MCF 10A (cell line): ENCODE measurements at regions of chr2 and their contacts with region 1.

Region 1: GRCh38 chr2:101151141-101151858 is at the start of gene TBC1D8:
- DNase-seq: peak; percentile 82
- H3K4me3 Mint-ChIP-seq: peak within 1 kb of the TSS; percentile 91
- H3K27ac Mint-ChIP-seq: peak within 1 kb of the TSS; percentile 55
- H3K4me1 Mint-ChIP-seq: peaks cover 54% of the 10 kb centered on the region
- H3K27me3 Mint-ChIP-seq: no peaks in the 10 kb centered on the region
- CTCF ChIP-seq: no peak
- total RNA-seq, gene TBC1D8: 48.1 and 50.9 TPM in 2 replicates

Region 2: GRCh38 chr2:100730346-100730745 is 421.0 kb before region 1 on chr2:
- CTCF ChIA-PET with region 1: interaction called, 4 read pairs
- POLR2A ChIA-PET with region 1: no interaction called
- intact Hi-C with region 1: loop called (anchors 2 kb)
- DNase-seq: peak; percentile 85
- H3K4me3 Mint-ChIP-seq: no peak overlapping the region
- H3K27ac Mint-ChIP-seq: no peak overlapping the region
- H3K4me1 Mint-ChIP-seq: peaks cover 20% of the 10 kb centered on the region
- H3K27me3 Mint-ChIP-seq: peaks cover 12% of the 10 kb centered on the region
- CTCF ChIP-seq: peak; percentile 77

Region 3: DNA sequence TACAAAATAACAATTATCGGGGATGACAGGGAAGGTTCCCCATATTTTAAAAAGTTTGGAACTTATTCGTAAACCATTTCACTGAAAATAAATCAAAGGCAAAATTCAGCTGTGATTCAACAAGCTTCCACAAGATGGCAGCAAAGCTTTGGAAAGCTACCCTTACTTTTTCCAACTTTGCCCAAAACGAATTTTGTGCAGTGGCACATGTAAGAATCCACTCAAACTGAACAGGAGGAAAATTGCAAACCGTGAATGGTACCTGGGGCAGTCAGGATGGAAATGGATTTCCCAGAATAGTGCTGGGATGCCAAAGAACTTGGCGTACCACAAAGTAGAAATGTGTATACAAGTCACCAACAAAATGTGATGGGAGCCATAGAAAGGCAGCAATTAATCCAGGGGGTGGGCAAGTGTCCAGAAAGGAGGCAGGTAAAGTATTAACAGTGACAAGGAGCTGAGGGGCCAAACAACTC is 138.6 kb before region 1 on chr2:
- CTCF ChIA-PET with region 1: interaction called, 40 read pairs
- POLR2A ChIA-PET with region 1: interaction called, 15 read pairs
- intact Hi-C with region 1: loop called (anchors 1 kb)
- DNase-seq: peak; percentile 60
- H3K4me3 Mint-ChIP-seq: no peak overlapping the region
- H3K27ac Mint-ChIP-seq: no peak overlapping the region
- H3K4me1 Mint-ChIP-seq: peaks cover 3% of the 10 kb centered on the region
- H3K27me3 Mint-ChIP-seq: no peaks in the 10 kb centered on the region
- CTCF ChIP-seq: peak; percentile 63

Region 4: DNA sequence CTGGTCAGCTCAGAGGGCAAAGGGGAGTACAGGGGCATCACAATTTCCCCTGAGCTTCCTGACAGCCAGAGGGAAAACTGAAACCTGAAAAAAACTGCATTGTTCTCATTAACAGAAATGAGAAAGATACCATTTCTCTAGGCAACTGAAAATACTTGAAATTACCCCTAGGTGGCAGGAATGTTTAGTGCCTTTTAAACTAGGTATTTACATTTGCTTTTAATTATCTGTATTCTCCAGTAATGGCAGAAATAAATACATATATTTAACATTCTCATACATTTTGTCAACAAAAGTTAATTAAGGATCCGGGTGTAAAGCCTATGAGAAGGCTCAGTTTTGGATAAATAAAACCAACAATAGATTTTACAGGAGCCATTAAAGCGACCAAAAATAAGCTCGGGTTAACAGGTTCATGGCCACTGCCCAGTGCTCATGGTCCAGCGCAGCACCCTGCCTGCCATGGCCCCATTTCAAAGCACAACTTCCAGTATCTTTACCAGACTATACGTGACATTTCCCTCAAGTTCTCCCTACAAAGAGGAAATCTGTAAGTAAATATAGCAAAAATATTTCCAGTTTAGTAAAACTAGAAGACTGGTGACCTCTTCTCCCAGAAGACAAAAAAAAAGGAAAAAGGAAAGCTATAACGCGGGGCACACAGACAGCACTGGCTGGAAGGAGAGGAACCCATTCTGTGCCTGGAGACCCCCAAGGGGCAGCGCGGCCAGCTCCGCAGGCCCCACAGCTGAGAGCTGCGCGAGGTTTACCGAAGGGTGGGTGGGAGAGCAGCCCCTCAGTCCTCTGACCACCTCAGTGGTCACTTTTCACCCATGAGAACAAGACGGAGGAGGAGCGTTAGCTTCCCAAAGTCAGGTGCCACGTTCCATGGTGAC is 114.5 kb before region 1 on chr2:
- CTCF ChIA-PET with region 1: interaction called, 79 read pairs
- POLR2A ChIA-PET with region 1: interaction called, 7 read pairs
- intact Hi-C with region 1: loop called (anchors 1 kb)
- DNase-seq: peak; percentile 35
- H3K4me3 Mint-ChIP-seq: no peak overlapping the region
- H3K27ac Mint-ChIP-seq: no peak overlapping the region
- H3K4me1 Mint-ChIP-seq: peaks cover 5% of the 10 kb centered on the region
- H3K27me3 Mint-ChIP-seq: no peaks in the 10 kb centered on the region
- CTCF ChIP-seq: peak; percentile 53

Region 5: DNA sequence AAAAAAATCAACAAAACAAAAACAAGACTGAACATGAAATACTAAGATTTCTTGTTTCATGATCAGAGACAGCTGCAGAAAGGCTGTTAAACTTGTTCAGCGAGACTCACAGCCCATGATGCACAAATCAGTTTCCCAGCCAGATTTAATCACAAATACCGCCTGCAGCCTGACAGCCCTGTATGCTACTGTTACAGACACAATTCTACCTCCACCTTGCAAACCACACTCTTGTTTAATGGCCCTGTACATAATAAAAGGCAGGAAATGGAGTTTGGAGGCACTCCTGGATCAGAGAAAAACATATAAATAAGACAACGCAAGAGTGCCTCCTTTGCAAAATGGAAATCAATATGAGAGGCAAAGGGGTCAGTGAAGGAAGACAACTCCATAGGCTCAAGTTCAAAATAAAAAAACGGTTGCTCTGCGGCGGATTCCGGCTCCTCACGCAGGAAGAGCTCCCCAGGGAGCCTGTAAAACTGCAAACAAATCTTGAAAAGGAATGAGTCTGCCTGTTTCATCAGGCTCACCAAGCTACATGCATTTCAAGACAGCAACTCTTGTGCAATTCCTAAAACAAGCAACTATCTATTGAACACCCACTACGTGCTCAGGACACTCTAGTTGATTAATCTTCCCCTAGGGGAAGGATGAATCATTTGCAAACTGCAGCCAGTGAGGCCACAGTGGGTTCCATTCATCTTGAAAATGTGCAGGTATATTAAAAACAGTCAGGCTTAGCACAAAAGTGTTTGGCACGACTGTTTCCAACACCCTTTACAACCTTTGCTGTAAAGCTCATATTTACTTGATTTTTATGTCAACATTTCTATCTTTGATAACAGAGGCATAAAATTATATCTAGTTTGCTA is 37.7 kb before region 1 on chr2:
- CTCF ChIA-PET with region 1: interaction called, 3 read pairs
- POLR2A ChIA-PET with region 1: interaction called, 275 read pairs
- intact Hi-C with region 1: loop called (anchors 5 kb)
- DNase-seq: peak; percentile 95
- H3K4me3 Mint-ChIP-seq: peak overlapping the region; percentile 67
- H3K27ac Mint-ChIP-seq: peak overlapping the region; percentile 90
- H3K4me1 Mint-ChIP-seq: peaks cover 47% of the 10 kb centered on the region
- H3K27me3 Mint-ChIP-seq: no peaks in the 10 kb centered on the region
- CTCF ChIP-seq: no peak

Region 6: DNA sequence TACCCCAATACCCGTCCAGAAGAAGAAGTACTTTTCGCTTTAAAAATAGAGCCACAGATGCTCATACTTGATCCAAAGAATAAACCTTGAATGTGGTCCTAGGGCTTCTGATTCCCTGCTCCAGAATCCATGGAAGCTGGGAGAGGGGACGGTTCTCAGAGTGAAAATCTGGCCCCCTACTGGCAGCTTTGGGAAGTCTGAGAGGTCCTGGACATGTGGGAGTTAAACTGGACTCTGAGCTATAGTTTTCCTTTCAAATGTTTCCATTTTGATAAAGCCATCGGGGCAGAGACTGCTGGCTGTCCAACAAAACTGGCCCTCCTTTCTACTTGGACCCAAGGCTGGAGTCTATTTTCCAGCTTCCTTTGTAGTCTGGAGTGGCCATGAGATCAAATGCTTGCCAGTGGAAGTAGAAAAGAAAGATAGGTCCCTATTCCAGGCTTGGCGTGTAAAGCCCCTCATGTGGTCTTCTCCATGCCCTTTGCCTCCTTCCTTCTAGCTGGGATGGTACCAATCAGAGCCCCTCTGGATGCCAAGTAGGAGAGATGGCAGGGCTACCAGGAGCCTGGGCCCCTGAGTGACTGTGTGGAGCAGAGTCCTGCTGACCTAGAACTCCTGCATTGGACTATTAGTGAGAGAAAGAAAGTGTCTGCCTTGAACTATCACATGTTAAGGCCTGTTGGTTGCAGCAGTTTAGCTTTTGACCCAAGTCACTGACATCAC is 37.5 kb after region 1 on chr2:
- CTCF ChIA-PET with region 1: interaction called, 16 read pairs
- POLR2A ChIA-PET with region 1: interaction called, 25 read pairs
- intact Hi-C with region 1: no loop called
- DNase-seq: peak; percentile 42
- H3K4me3 Mint-ChIP-seq: no peak overlapping the region
- H3K27ac Mint-ChIP-seq: no peak overlapping the region
- H3K4me1 Mint-ChIP-seq: peaks cover 16% of the 10 kb centered on the region
- H3K27me3 Mint-ChIP-seq: no peaks in the 10 kb centered on the region
- CTCF ChIP-seq: peak; percentile 31

Region 7: DNA sequence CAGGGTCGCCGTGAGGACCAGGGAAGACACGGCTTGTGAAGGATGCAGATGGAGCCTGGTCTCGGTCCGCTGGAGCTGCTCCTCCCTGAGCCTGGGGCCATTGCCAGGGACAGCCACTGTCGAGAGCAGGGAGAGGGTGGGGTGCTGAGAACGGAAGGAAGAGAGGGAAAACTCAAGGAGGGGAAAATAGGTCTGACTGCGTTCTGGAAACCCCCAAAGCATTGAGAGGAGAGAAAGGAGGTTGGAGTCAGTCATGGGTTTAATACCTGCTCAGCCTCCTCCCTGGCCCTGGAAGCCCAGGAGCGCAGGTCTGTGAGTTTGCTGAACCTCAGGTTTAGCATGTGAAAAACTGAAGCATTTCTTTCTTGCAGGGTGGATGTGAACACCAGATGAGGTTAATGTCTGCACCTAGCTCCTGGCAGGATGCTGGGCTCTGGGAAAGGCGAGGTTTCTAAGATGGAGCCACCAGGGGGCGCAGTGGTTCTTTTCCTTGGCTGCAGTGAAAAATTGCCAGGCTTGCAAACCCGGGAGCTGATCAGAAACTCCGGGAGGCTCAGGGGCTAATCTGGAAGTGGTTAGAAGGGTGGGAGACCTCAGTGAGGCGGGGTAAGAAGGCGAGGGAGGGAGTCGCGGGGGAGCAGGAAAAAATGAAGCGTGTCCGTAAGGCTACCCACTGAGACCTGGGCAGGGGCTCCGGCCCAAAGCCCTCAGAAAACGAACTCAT is 190.8 kb after region 1 on chr2:
- CTCF ChIA-PET with region 1: no interaction called
- POLR2A ChIA-PET with region 1: no interaction called
- intact Hi-C with region 1: no loop called
- DNase-seq: peak; percentile 78
- H3K4me3 Mint-ChIP-seq: no peak overlapping the region
- H3K27ac Mint-ChIP-seq: no peak overlapping the region
- H3K4me1 Mint-ChIP-seq: peaks cover 5% of the 10 kb centered on the region
- H3K27me3 Mint-ChIP-seq: no peaks in the 10 kb centered on the region
- CTCF ChIP-seq: peak; percentile 78